ENCODE measurements at regions of chr10 and their contacts with region 1.

Region 1: DNA sequence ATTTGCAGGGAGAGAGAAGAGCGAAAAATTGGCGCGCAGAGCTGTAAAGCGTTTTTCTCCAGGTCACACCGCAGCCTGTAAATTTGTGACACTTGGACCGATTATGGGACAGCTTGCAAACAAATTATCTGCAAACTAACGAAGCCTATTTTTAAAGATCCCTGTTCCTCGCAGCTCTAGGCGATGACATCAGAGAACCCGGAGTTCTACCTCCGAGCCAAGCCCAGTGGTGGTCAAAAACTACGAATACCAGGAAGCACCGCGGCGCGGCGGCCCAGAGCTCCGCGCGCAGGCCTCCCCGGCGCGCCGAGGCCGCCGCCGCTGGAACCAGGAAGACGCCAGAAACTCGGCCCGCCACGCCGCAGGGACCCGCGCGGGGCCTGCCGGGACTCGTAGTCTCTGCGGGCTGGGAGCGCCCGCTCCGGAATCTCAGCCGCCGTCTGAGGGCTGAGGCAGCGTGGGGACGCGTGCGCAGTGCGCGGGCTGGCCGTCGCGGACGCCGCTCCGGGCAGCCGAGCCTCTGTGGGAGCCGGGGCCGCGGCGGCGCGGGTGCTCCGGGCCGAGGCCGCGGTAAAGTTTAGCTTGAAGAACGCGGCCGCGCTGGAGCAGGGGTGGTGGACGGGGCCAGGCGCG is at the start of gene PLEKHA1:
- DNase-seq: peak; percentile 88 to 96 (median 92)
- ATAC-seq: peak; percentile 89
- H3K4me3 ChIP-seq: peak within 1 kb of the TSS; percentile 93 to 96
- H3K4me3 Mint-ChIP-seq: peak within 1 kb of the TSS; percentile 93
- H3K27ac ChIP-seq: peak within 1 kb of the TSS; percentile 80 to 92
- H3K27ac Mint-ChIP-seq: peak within 1 kb of the TSS; percentile 96
- H3K4me1 ChIP-seq: peaks cover 24% of the 10 kb centered on the region
- H3K4me1 Mint-ChIP-seq: peaks cover 35% of the 10 kb centered on the region
- H3K27me3 ChIP-seq: no peaks in the 10 kb centered on the region
- H3K27me3 Mint-ChIP-seq: peaks cover 2% of the 10 kb centered on the region
- CTCF ChIP-seq: no peak
- total RNA-seq, gene PLEKHA1: 23.6 to 24.6 TPM

Region 2: DNA sequence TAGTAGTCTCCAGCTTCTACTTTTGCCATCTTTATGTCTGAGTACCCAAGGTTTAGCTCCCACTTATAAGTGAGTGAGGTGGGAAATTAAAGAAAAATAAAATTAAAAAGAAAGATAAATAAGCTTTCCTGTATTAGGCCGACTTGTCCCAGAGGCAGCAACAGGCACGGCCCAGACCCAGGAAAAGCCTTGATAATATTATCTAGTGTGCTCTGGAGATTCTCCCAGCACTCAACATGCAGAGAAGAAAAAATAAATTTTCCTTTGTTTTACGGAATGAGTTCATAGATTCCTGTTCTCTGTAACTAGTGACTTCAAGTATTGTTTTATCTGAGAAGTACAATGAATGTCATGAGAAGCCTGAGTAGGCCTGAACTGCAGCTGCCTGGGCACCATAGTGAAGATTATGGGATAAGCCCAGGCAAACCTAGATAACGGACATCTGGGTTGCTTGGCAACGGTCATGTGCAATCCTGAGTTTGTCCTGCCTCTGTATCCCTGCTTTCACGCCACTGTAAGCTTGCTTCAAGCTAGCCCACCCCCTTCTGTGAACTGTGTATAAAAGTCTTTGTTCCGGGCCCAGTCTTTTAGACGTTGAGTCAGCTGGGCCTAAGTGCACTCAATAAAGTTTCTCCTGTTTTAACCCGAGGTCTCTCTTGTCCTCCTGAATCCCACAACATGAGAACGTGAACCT is 453.0 kb before region 1 on chr10:
- CTCF ChIA-PET with region 1: no interaction called
- POLR2A ChIA-PET with region 1: interaction called, 4 read pairs
- intact Hi-C with region 1: loop called (anchors 5 kb)
- DNase-seq: no peak
- ATAC-seq: no peak
- H3K4me3 ChIP-seq: no peak overlapping the region
- H3K4me3 Mint-ChIP-seq: no peak overlapping the region
- H3K27ac ChIP-seq: no peak overlapping the region
- H3K27ac Mint-ChIP-seq: no peak overlapping the region
- H3K4me1 ChIP-seq: peaks cover 3% of the 10 kb centered on the region
- H3K4me1 Mint-ChIP-seq: peaks cover 16% of the 10 kb centered on the region
- H3K27me3 ChIP-seq: no peaks in the 10 kb centered on the region
- H3K27me3 Mint-ChIP-seq: no peaks in the 10 kb centered on the region
- CTCF ChIP-seq: no peak

Region 3: DNA sequence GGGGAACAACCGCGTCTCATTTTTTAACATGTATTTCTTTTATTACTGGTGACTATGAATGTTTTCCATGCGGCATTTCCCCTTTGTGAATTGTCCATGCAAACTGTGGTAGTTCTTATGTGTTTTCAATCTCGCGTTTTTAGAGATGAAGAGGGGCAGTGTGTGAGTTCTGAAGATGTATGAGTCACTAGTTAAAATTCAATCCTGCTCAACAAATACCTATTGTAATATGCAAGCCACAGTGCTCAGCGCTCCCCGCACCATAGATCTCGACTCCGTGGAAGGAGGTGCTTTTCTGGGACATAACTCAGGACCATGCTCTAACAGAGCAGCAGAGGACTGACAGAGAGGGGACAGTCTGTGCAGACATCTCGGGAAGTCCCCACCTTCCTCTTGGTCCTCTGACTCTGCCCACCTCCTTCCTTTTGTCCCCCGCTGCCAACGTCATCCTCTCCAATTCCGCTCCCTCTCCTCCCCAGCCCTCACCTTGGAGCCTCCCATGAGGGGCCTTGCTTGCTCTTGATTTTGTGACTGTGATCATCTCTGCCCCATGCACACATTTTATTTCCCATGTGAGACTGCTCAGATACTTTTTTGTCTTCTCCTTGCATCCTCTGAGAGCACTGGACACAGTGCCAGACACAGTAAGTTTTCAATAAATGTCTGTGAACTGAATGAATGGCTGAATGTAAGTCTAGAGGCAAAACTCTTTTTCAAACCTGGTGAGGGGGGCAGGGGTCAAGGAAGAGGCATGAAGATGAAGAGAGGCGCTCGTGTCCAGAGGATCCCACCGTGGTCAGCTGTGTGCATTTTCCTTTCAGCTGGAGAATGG is 42.5 kb before region 1 on chr10:
- CTCF ChIA-PET with region 1: no interaction called
- POLR2A ChIA-PET with region 1: no interaction called
- intact Hi-C with region 1: no loop called
- DNase-seq: no peak
- ATAC-seq: no peak
- H3K4me3 ChIP-seq: no peak overlapping the region
- H3K4me3 Mint-ChIP-seq: no peak overlapping the region
- H3K27ac ChIP-seq: no peak overlapping the region
- H3K27ac Mint-ChIP-seq: no peak overlapping the region
- H3K4me1 ChIP-seq: no peaks in the 10 kb centered on the region
- H3K4me1 Mint-ChIP-seq: no peaks in the 10 kb centered on the region
- H3K27me3 ChIP-seq: no peaks in the 10 kb centered on the region
- H3K27me3 Mint-ChIP-seq: peaks cover 25% of the 10 kb centered on the region
- CTCF ChIP-seq: no peak

Region 4: DNA sequence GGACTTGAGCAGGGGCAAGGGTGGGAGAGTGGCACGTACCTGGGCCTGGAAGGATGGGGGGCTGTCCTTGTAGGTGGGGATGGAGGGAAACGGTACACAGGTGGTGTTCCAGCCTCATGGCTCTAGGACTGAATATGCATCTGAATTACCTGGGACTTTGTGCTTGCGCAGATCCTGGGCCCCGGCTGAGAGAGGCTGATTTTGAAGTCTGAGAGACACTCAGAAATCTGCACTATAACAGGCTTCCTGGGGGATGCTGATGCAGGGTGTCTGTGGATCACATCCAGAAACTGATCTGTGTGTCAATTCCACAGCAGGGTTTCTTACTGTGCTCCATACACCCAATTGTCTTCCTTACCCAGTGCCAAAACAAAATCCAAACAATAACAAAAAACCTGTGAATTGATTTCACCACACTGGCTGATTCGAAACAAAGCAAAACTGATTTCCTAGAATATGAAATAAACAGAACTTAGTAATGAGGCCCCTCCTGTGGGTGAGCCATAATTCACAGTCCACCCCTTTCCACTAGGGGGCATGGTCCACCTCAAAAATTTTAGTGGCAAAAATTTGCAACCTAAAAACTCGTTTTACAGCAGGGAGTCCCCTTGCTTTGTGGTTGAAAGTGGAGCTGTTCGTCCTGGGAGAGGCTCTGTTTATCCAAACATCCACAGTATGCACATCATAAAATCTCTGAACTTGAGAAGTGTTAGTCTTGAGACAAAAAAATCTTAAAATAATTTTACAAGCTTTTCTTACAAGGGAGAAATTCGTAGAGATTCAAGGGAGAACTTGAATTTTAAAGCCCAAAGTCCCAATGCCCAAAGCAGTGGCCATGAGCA is 31.8 kb before region 1 on chr10:
- CTCF ChIA-PET with region 1: interaction called, 13 read pairs
- POLR2A ChIA-PET with region 1: interaction called, 4 read pairs
- intact Hi-C with region 1: loop called in 1 of 2 experiments (anchors 2 kb)
- DNase-seq: peak; percentile 46 to 77 (median 66)
- ATAC-seq: peak; percentile 79
- H3K4me3 ChIP-seq: no peak overlapping the region
- H3K4me3 Mint-ChIP-seq: no peak overlapping the region
- H3K27ac ChIP-seq: no peak overlapping the region
- H3K27ac Mint-ChIP-seq: no peak overlapping the region
- H3K4me1 ChIP-seq: no peaks in the 10 kb centered on the region
- H3K4me1 Mint-ChIP-seq: peaks cover 3% of the 10 kb centered on the region
- H3K27me3 ChIP-seq: no peaks in the 10 kb centered on the region
- H3K27me3 Mint-ChIP-seq: no peaks in the 10 kb centered on the region
- CTCF ChIP-seq: peak; percentile 89

Region 5: GRCh38 chr10:122419876-122420623 is 45.7 kb after region 1 on chr10:
- CTCF ChIA-PET with region 1: interaction called, 5 read pairs
- POLR2A ChIA-PET with region 1: interaction called, 10 read pairs
- intact Hi-C with region 1: loop called (anchors 1 to 2 kb)
- DNase-seq: peak in 1 of 9 experiments; percentile 23
- ATAC-seq: no peak
- H3K4me3 ChIP-seq: no peak overlapping the region
- H3K4me3 Mint-ChIP-seq: no peak overlapping the region
- H3K27ac ChIP-seq: peak overlapping the region; percentile 26 to 66
- H3K27ac Mint-ChIP-seq: peak overlapping the region; percentile 88
- H3K4me1 ChIP-seq: peaks cover 96% of the 10 kb centered on the region
- H3K4me1 Mint-ChIP-seq: peaks cover 87% of the 10 kb centered on the region
- H3K27me3 ChIP-seq: no peaks in the 10 kb centered on the region
- H3K27me3 Mint-ChIP-seq: no peaks in the 10 kb centered on the region
- CTCF ChIP-seq: no peak

Region 6: GRCh38 chr10:122879339-122880273 is 505.3 kb after region 1 on chr10 and contains the start of gene FAM24B:
- CTCF ChIA-PET with region 1: no interaction called
- POLR2A ChIA-PET with region 1: no interaction called
- intact Hi-C with region 1: loop called in 1 of 2 experiments (anchors 10 kb)
- DNase-seq: peak; percentile 87 to 99 (median 94)
- ATAC-seq: peak; percentile 86
- H3K4me3 ChIP-seq: peak within 1 kb of the TSS; percentile 56 to 75
- H3K4me3 Mint-ChIP-seq: peak within 1 kb of the TSS; percentile 93
- H3K27ac ChIP-seq: peak within 1 kb of the TSS; percentile 60 to 79
- H3K27ac Mint-ChIP-seq: peak within 1 kb of the TSS; percentile 88
- H3K4me1 ChIP-seq: peaks cover 34% of the 10 kb centered on the region
- H3K4me1 Mint-ChIP-seq: peaks cover 53% of the 10 kb centered on the region
- H3K27me3 ChIP-seq: no peaks in the 10 kb centered on the region
- H3K27me3 Mint-ChIP-seq: no peaks in the 10 kb centered on the region
- CTCF ChIP-seq: no peak
- total RNA-seq, gene FAM24B: 12.5 to 12.7 TPM

Region 7: DNA sequence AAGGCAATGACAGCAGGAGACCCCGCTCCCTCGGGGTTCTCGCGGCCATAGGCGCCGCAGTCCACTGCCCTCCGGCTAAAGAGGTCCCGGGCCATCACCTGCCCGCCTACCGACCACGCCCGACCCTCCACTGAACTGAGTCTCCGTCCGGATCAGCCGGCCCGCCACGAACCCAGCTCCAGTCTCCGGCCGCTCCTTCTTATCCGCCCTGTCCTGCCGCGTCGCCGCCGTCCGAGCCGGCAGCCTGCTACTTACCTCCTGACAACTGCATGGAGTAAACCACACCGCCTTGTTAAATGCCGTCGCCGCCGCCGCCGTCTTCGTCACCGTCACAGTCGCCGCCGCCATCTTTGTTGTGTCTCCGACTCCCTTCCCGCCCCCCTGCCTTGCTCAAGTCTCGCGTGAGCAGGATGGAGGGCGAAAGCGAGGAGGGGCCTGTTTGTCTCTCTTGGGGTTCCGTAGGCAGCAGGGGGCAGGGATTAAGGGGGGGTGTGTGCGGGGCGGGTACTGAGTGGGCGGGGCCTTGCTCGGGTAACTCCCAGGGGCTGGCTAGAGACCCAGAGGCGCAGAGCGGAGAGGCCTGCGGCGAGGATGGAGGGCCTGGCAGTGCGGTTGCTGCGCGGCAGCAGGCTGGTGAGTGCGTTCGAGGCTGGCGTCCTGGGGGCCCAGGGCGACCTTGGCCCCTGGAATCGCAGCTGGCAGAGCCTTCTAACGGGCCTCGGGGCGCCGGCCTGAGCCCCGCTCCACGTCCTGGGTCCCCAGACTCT is 634.3 kb after region 1 on chr10 and contains the starts of genes ACADSB and IKZF5:
- CTCF ChIA-PET with region 1: no interaction called
- POLR2A ChIA-PET with region 1: interaction called, 3 read pairs
- intact Hi-C with region 1: loop called (anchors 1 to 2 kb)
- DNase-seq: peak; percentile 92 to 99 (median 96)
- ATAC-seq: peak; percentile 89
- H3K4me3 ChIP-seq: peak within 1 kb of the TSS; percentile 89 to 100
- H3K4me3 Mint-ChIP-seq: peak within 1 kb of the TSS; percentile 97
- H3K27ac ChIP-seq: peak within 1 kb of the TSS; percentile 98 to 99
- H3K27ac Mint-ChIP-seq: peak within 1 kb of the TSS; percentile 99
- H3K4me1 ChIP-seq: peaks cover 48% of the 10 kb centered on the region
- H3K4me1 Mint-ChIP-seq: peaks cover 62% of the 10 kb centered on the region
- H3K27me3 ChIP-seq: no peaks in the 10 kb centered on the region
- H3K27me3 Mint-ChIP-seq: no peaks in the 10 kb centered on the region
- CTCF ChIP-seq: no peak
- total RNA-seq, gene ACADSB: 18.2 to 18.5 TPM
- total RNA-seq, gene IKZF5: 89.5 to 96.1 TPM

Measured in CD8-positive, alpha-beta T cell (primary cell).